Activated B cell treated with CpG ODN at 0.5 μM for 24 hours (primary cell): ENCODE measurements at regions of chr4 and their contacts with region 1.

Region 1: DNA sequence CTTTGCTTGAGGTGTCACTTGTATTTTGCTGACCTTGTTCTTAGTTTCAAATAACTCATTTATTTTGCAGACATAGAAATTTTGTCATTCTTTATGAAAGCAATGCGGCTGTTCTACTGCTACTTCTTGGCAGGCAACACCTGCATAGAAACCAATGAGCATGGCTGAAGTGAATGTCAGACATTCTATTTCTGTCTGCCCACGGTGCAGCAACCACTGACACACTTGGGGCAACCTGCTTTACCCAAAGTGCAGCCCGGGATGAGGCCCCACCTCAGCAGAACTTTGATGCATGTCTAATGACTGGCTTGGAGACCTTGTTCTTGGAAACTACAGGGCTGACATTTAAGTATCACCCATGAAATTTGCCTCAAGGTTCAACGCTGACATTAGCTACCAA is 93.6 kb downstream of the RBM47 start:
- DNase-seq: no peak
- ATAC-seq: peak; percentile 74
- H3K4me3 Mint-ChIP-seq: peak overlapping the region; percentile 46
- H3K27ac Mint-ChIP-seq: peak overlapping the region; percentile 76
- H3K4me1 Mint-ChIP-seq: peaks cover 17% of the 10 kb centered on the region
- H3K27me3 Mint-ChIP-seq: no peaks in the 10 kb centered on the region
- CTCF ChIP-seq: no peak

Region 2: DNA sequence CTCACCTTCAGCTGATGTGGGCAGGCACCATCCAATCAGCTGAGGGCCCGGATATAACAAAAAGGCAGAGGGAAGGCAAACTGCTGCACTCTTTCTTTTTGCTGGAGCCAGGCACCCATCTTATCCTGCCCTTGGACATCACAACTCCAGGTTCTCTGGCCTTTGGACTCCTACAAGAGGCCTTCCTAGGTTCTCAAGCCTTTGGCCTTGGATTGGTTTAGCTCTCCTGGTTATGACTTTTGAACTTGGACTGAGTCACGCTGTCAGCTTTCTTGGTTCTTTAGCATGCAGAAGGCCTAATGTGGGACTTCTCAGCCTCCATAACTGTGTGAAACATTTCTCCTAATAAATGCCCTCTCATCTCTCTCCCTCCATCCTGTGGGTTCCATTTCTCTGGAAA is 502.4 kb before region 1 on chr4:
- CTCF ChIA-PET with region 1: no interaction called
- POLR2A ChIA-PET with region 1: no interaction called
- intact Hi-C with region 1: no loop called
- DNase-seq: no peak
- ATAC-seq: no peak
- H3K4me3 Mint-ChIP-seq: no peak overlapping the region
- H3K27ac Mint-ChIP-seq: no peak overlapping the region
- H3K4me1 Mint-ChIP-seq: no peaks in the 10 kb centered on the region
- H3K27me3 Mint-ChIP-seq: no peaks in the 10 kb centered on the region
- CTCF ChIP-seq: no peak

Region 3: GRCh38 chr4:40251366-40251765 is 284.7 kb before region 1 on chr4:
- CTCF ChIA-PET with region 1: no interaction called
- POLR2A ChIA-PET with region 1: no interaction called
- intact Hi-C with region 1: no loop called
- DNase-seq: no peak
- ATAC-seq: no peak
- H3K4me3 Mint-ChIP-seq: no peak overlapping the region
- H3K27ac Mint-ChIP-seq: no peak overlapping the region
- H3K4me1 Mint-ChIP-seq: peaks cover 48% of the 10 kb centered on the region
- H3K27me3 Mint-ChIP-seq: no peaks in the 10 kb centered on the region
- CTCF ChIP-seq: no peak

Region 4: DNA sequence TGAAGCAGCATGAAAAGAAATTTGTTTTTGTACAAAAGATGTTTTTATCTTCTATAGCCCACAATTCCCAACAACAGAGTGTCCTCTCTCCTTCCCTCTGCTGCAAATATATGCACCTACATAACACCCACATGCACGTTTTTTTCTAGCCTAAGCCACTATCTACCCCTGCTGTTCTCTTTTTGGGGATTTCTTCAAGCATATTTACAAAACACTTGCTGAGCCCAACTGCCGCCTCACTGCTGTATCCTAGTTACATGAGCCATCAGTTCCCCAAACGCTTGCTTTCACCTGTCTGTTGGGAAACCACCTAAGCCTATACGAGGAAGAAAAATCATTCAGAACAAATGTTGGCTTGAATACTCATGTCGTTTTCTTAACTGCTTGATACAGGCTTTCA is 73.7 kb before region 1 on chr4:
- CTCF ChIA-PET with region 1: no interaction called
- POLR2A ChIA-PET with region 1: interaction called, 5 read pairs
- intact Hi-C with region 1: loop called (anchors 2 kb)
- DNase-seq: no peak
- ATAC-seq: peak; percentile 95
- H3K4me3 Mint-ChIP-seq: no peak overlapping the region
- H3K27ac Mint-ChIP-seq: peak overlapping the region; percentile 72
- H3K4me1 Mint-ChIP-seq: peaks cover 17% of the 10 kb centered on the region
- H3K27me3 Mint-ChIP-seq: no peaks in the 10 kb centered on the region
- CTCF ChIP-seq: no peak